PC-3 (cell line): ENCODE measurements at regions of chr14 and their contacts with region 1.

Region 1: GRCh38 chr14:20343092-20343861 is at the start of gene PARP2:
- DNase-seq: peak; percentile 100
- ATAC-seq: peak; percentile 99
- H3K4me3 ChIP-seq: peak within 1 kb of the TSS; percentile 98
- H3K27ac ChIP-seq: peak within 1 kb of the TSS; percentile 75
- H3K4me1 ChIP-seq: peaks cover 9% of the 10 kb centered on the region; the same call in 1 of the 2 replicates
- H3K27me3 ChIP-seq: no peaks in the 10 kb centered on the region
- CTCF ChIP-seq: no peak
- total RNA-seq, gene PARP2: 35.6 and 38.3 TPM in 2 replicates

Region 2: DNA sequence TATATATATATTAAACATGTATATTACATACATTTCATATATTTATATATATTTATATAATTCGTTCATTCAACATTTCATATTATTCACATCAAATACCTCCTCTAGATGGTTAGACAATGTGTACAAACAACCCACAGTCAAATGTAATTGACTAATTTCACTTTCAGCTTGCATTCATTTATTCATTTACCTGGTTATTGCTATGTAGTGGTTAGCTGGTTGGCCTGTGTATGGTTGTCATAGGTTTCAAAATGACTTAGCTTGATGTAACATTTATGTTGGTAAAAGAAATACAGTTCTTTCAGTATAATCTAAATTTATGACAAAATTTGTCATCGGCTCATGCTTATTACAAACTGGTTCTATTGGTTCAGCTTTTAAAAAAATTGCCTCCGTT is 307.8 kb before region 1 on chr14:
- CTCF ChIA-PET with region 1: no interaction called
- POLR2A ChIA-PET with region 1: no interaction called
- intact Hi-C with region 1: no loop called
- DNase-seq: no peak
- ATAC-seq: no peak
- H3K4me3 ChIP-seq: no peak overlapping the region
- H3K27ac ChIP-seq: no peak overlapping the region
- H3K4me1 ChIP-seq: no peaks in the 10 kb centered on the region
- H3K27me3 ChIP-seq: peaks cover 10% of the 10 kb centered on the region; the same call in 1 of the 2 replicates
- CTCF ChIP-seq: no peak

Region 3: GRCh38 chr14:20332788-20333493 is 10.3 kb before region 1 on chr14 and contains the start of gene CCNB1IP1:
- CTCF ChIA-PET with region 1: interaction called, 8 read pairs
- POLR2A ChIA-PET with region 1: interaction called, 9 read pairs
- intact Hi-C with region 1: loop called (anchors 1 kb)
- DNase-seq: peak; percentile 94
- ATAC-seq: peak; percentile 97
- H3K4me3 ChIP-seq: peak within 1 kb of the TSS; percentile 83
- H3K27ac ChIP-seq: peak within 1 kb of the TSS; percentile 26
- H3K4me1 ChIP-seq: peaks cover 10% of the 10 kb centered on the region
- H3K27me3 ChIP-seq: no peaks in the 10 kb centered on the region
- CTCF ChIP-seq: no peak
- total RNA-seq, gene CCNB1IP1: 32.8 and 35.0 TPM in 2 replicates

Region 4: GRCh38 chr14:20365928-20366327 is 22.7 kb after region 1 on chr14:
- CTCF ChIA-PET with region 1: no interaction called
- POLR2A ChIA-PET with region 1: interaction called, 19 read pairs
- intact Hi-C with region 1: no loop called
- DNase-seq: no peak
- ATAC-seq: no peak
- H3K4me3 ChIP-seq: no peak overlapping the region
- H3K27ac ChIP-seq: no peak overlapping the region
- H3K4me1 ChIP-seq: no peaks in the 10 kb centered on the region
- H3K27me3 ChIP-seq: no peaks in the 10 kb centered on the region
- CTCF ChIP-seq: no peak

Region 5: DNA sequence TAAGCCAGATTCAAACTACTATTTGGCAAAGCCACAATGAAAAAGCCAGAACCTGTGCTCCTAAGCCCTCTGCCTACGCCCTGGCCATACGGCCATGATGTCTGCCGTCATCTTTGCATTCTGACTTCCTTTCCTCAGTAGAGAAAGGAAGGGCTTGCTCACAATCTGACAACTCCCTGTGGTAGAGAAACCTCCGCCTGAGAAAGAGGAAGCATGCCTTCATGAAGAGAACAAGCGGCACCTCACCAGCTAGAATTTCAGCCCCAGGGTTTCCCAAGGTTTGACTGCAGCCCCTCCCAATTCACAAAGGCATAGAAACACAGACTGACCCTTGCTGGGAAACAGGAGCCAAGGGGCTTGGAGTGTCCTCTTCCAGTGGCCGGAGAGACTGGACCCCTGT is 44.3 kb after region 1 on chr14:
- CTCF ChIA-PET with region 1: no interaction called
- POLR2A ChIA-PET with region 1: no interaction called
- intact Hi-C with region 1: no loop called
- DNase-seq: no peak
- ATAC-seq: no peak
- H3K4me3 ChIP-seq: no peak overlapping the region
- H3K27ac ChIP-seq: no peak overlapping the region
- H3K4me1 ChIP-seq: no peaks in the 10 kb centered on the region
- H3K27me3 ChIP-seq: no peaks in the 10 kb centered on the region
- CTCF ChIP-seq: no peak

Region 6: GRCh38 chr14:20413045-20413799 is 69.9 kb after region 1 on chr14 and contains the start of gene TEP1:
- CTCF ChIA-PET with region 1: interaction called, 22 read pairs
- POLR2A ChIA-PET with region 1: interaction called, 3 read pairs
- intact Hi-C with region 1: loop called (anchors 1 kb)
- DNase-seq: peak; percentile 87
- ATAC-seq: peak; percentile 86
- H3K4me3 ChIP-seq: peak within 1 kb of the TSS; percentile 98
- H3K27ac ChIP-seq: peak within 1 kb of the TSS; percentile 93
- H3K4me1 ChIP-seq: peaks cover 32% of the 10 kb centered on the region
- H3K27me3 ChIP-seq: no peaks in the 10 kb centered on the region
- CTCF ChIP-seq: no peak
- total RNA-seq, gene TEP1: 8.9 and 11.7 TPM in 2 replicates

Region 7: GRCh38 chr14:20454516-20455354 is 111.5 kb after region 1 on chr14 and contains the starts of genes APEX1 and OSGEP:
- CTCF ChIA-PET with region 1: interaction called, 3 read pairs
- POLR2A ChIA-PET with region 1: interaction called, 18 read pairs
- intact Hi-C with region 1: loop called (anchors 1 kb)
- DNase-seq: peak; percentile 99
- ATAC-seq: peak; percentile 86
- H3K4me3 ChIP-seq: peak within 1 kb of the TSS; percentile 82
- H3K27ac ChIP-seq: peak within 1 kb of the TSS; percentile 93
- H3K4me1 ChIP-seq: peaks cover 14% of the 10 kb centered on the region
- H3K27me3 ChIP-seq: no peaks in the 10 kb centered on the region
- CTCF ChIP-seq: no peak
- total RNA-seq, gene APEX1: 147 and 189 TPM in 2 replicates
- total RNA-seq, gene OSGEP: 57.7 and 64.1 TPM in 2 replicates

Region 8: GRCh38 chr14:20461274-20462001 is 118.2 kb after region 1 on chr14 and contains the start of gene PIP4P1:
- CTCF ChIA-PET with region 1: no interaction called
- POLR2A ChIA-PET with region 1: interaction called, 37 read pairs
- intact Hi-C with region 1: no loop called
- DNase-seq: peak; percentile 99
- ATAC-seq: peak; percentile 95
- H3K4me3 ChIP-seq: peak within 1 kb of the TSS; percentile 76
- H3K27ac ChIP-seq: peak within 1 kb of the TSS; percentile 63
- H3K4me1 ChIP-seq: peaks cover 18% of the 10 kb centered on the region
- H3K27me3 ChIP-seq: no peaks in the 10 kb centered on the region
- CTCF ChIP-seq: no peak
- total RNA-seq, gene PIP4P1: 32.9 and 35.2 TPM in 2 replicates

Region 9: DNA sequence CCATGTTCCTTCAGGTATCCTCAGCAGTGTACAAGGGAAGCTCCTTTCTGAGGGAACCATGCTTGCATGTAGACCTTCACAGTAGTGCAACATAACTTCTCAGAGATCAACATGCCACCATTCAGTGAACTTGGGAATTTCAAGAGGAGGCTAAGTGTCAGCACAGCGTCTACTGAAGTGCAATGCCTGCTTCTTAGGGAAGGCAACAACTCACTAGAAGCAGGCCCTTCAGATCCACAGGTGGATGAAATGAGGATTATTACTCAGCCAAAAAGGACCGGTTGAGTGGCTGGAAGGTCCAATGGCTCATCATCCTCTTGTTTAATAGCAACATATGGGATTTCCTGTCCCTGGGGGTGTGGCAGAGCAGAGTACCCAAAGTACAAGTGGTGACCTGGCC is 180.8 kb after region 1 on chr14:
- CTCF ChIA-PET with region 1: no interaction called
- POLR2A ChIA-PET with region 1: interaction called, 12 read pairs
- intact Hi-C with region 1: no loop called
- DNase-seq: no peak
- ATAC-seq: no peak
- H3K4me3 ChIP-seq: no peak overlapping the region
- H3K27ac ChIP-seq: no peak overlapping the region
- H3K4me1 ChIP-seq: no peaks in the 10 kb centered on the region
- H3K27me3 ChIP-seq: peaks cover 8% of the 10 kb centered on the region; the same call in 1 of the 2 replicates
- CTCF ChIP-seq: no peak